AG04450 (cell line): ENCODE measurements at regions of chr11 and their contacts with region 1.

Region 1: GRCh38 chr11:116879800-116880625 is 42.6 kb upstream of the APOA1 start:
- DNase-seq: peak; percentile 59
- H3K4me3 ChIP-seq: no peak overlapping the region
- H3K27ac ChIP-seq: no peak overlapping the region
- H3K27me3 ChIP-seq: no peaks in the 10 kb centered on the region
- CTCF ChIP-seq: peak; percentile 89

Region 2: GRCh38 chr11:116890193-116890592 is 10.2 kb after region 1 on chr11:
- CTCF ChIA-PET with region 1: interaction called, 27 read pairs
- POLR2A ChIA-PET with region 1: no interaction called
- DNase-seq: no peak
- H3K4me3 ChIP-seq: no peak overlapping the region
- H3K27ac ChIP-seq: no peak overlapping the region
- H3K27me3 ChIP-seq: no peaks in the 10 kb centered on the region
- CTCF ChIP-seq: no peak

Region 3: GRCh38 chr11:117072517-117073461 is 192.8 kb after region 1 on chr11:
- CTCF ChIA-PET with region 1: interaction called, 10 read pairs
- POLR2A ChIA-PET with region 1: no interaction called
- DNase-seq: peak; percentile 75
- H3K4me3 ChIP-seq: no peak overlapping the region
- H3K27ac ChIP-seq: no peak overlapping the region
- H3K27me3 ChIP-seq: no peaks in the 10 kb centered on the region
- CTCF ChIP-seq: no peak

Region 4: GRCh38 chr11:117098269-117099232 is 218.5 kb after region 1 on chr11 and contains the start of gene SIK3:
- CTCF ChIA-PET with region 1: interaction called, 54 read pairs
- POLR2A ChIA-PET with region 1: interaction called, 6 read pairs
- DNase-seq: peak; percentile 83
- H3K4me3 ChIP-seq: peak within 1 kb of the TSS; percentile 78
- H3K27ac ChIP-seq: peak within 1 kb of the TSS; percentile 91
- H3K27me3 ChIP-seq: no peaks in the 10 kb centered on the region
- CTCF ChIP-seq: peak; percentile 67
- polyA plus RNA-seq, gene SIK3: 9.0 and 12.6 TPM in 2 replicates